Transverse colon (tissue), 4 donors: ENCODE measurements at regions of chr3 and their contacts with region 1.

Region 1: DNA sequence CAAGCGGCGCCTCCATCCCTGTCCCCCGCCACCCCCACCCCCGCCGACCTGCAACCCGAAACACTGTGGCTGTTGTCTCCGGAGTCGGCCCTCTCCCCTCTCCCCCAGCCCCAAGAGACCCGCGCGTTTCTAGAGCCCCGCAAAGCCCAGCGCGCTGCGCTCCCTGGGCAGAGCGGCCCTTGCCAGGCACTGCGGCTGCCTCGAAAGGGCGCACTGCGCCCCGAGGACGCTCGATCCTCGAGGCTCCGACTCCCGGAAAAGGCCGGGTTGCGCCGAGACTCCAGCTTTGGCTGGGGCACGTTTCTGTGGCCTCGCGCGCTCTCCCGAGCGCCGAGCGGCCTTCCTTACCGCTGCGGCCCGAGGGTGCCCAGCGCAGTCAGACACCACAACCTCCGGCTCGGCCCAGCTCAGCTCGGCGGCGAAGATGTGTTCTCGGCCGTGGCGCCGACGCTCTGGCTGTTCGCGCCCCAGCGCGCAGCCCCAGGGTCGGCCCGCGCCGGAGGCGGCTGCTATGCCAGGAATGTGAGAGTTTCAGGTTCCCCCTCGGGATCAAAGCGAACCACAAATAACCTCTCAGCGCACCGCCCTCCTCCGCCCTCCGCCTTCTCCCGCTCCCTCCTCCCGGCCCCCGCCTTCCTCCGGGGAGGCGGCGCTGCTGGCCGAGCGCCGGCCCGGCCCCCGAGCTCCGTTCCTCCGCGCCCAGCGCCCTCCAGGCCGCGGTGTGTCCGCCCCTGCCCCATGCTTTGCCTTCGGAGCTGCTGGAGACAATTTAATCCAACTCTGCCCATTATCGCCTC is at the start of gene AMOTL2:
- DNase-seq: peak; percentile 83
- H3K4me3 ChIP-seq: peak within 1 kb of the TSS; percentile 45 to 70 (median 64)
- H3K27ac ChIP-seq: peak within 1 kb of the TSS; percentile 96 to 99 (median 98)
- H3K4me1 ChIP-seq: peaks cover 37 to 62% (median 52%) of the 10 kb centered on the region in 4 donors
- H3K27me3 ChIP-seq: peaks cover 2% of the 10 kb centered on the region
- CTCF ChIP-seq: no peak
- EP300 ChIP-seq: no peak
- POLR2A ChIP-seq: peak; percentile 91
- total RNA-seq, gene AMOTL2: 14.5 to 50.9 (median 23.8) TPM

Region 2: DNA sequence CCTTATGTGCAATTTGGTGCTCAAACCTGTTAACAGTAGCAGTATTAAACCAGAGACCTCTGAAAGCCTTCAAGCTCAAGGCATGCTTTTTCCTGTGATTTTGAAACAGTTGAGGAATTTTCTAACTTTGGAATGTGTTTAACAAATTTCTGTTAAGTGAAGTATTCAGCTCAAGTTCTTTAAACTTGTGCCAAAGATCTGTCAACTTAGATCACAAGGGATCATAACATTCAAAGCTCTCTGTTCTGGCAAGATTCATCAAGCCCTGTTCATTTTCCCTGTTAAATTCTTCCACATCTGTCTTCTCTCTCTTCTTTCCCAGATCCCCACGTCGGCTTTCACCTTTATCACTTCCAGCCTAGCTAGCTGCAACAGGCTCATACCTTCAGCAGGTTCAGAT is 94.7 kb before region 1 on chr3:
- in situ Hi-C with region 1: no loop called
- intact Hi-C with region 1: no loop called
- DNase-seq: no peak
- H3K4me3 ChIP-seq: no peak overlapping the region
- H3K27ac ChIP-seq: no peak overlapping the region
- H3K4me1 ChIP-seq: no peaks in the 10 kb centered on the region
- H3K27me3 ChIP-seq: no peaks in the 10 kb centered on the region
- CTCF ChIP-seq: no peak
- EP300 ChIP-seq: no peak
- POLR2A ChIP-seq: no peak

Region 3: DNA sequence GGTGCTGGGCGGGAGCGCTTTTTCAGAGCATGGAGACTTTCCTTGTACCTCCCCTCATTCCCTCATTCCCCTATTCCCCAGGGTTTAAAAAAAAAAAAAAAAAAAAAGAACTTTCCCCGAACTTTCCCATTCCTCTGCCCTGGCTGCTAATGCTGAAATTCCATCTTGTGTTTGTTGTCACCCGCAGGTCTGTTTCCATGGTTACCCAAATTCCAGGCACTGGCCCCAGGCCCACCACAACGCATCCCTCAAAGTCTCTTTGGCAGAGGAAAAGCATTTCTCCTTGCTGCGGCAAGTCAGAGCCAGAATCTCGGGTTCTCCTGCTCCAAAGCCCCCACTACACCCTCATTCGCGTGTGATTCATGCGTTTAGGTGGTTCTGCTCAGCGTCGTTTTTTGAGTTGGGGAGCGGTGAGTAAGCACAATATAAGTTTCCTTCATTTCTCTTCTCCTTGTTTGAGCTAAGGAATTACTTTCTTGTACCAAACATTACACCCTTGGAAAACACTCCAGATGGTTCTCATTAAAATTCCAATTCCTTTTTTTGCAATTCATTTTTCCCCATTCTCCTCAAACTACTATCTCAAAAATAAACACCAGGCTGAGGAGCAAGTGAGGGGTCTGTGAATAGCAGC is 90.0 kb after region 1 on chr3:
- in situ Hi-C with region 1: loop called in 1 of 4 experiments (anchors 10 kb)
- intact Hi-C with region 1: no loop called
- DNase-seq: peak; percentile 58
- H3K4me3 ChIP-seq: no peak overlapping the region
- H3K27ac ChIP-seq: peak overlapping the region; percentile 67 to 83 (median 77)
- H3K4me1 ChIP-seq: peaks cover 4 to 23% (median 6%) of the 10 kb centered on the region in 4 donors
- H3K27me3 ChIP-seq: no peaks in the 10 kb centered on the region
- CTCF ChIP-seq: no peak
- EP300 ChIP-seq: no peak
- POLR2A ChIP-seq: no peak

Region 4: GRCh38 chr3:134473868-134474546 is 99.8 kb after region 1 on chr3:
- in situ Hi-C with region 1: loop called in 2 of 4 experiments (anchors 10 kb)
- intact Hi-C with region 1: loop called (anchors 10 kb)
- DNase-seq: peak; percentile 77
- H3K4me3 ChIP-seq: no peak overlapping the region
- H3K27ac ChIP-seq: no peak overlapping the region
- H3K4me1 ChIP-seq: peaks cover 0 to 3% (median 0%) of the 10 kb centered on the region in 4 donors
- H3K27me3 ChIP-seq: no peaks in the 10 kb centered on the region
- CTCF ChIP-seq: peak; percentile 80 to 88 (median 82)
- EP300 ChIP-seq: no peak
- POLR2A ChIP-seq: no peak

Region 5: GRCh38 chr3:134485718-134486576 is 111.8 kb after region 1 on chr3 and contains the starts of genes ANAPC13 and CEP63:
- in situ Hi-C with region 1: no loop called
- intact Hi-C with region 1: no loop called
- DNase-seq: peak; percentile 95
- H3K4me3 ChIP-seq: peak within 1 kb of the TSS; percentile 72 to 81 (median 78)
- H3K27ac ChIP-seq: peak within 1 kb of the TSS; percentile 94 to 97 (median 97)
- H3K4me1 ChIP-seq: peaks cover 6 to 32% (median 26%) of the 10 kb centered on the region in 4 donors
- H3K27me3 ChIP-seq: no peaks in the 10 kb centered on the region
- CTCF ChIP-seq: peak in 1 of 5 experiments; percentile 26
- EP300 ChIP-seq: no peak
- POLR2A ChIP-seq: peak; percentile 72
- total RNA-seq, gene ANAPC13: 5.6 to 81.0 (median 29.3) TPM
- total RNA-seq, gene CEP63: 12.1 to 29.2 (median 16.9) TPM